H1 (cell line): ENCODE measurements at regions of chr16 and their contacts with region 1.

Region 1: DNA sequence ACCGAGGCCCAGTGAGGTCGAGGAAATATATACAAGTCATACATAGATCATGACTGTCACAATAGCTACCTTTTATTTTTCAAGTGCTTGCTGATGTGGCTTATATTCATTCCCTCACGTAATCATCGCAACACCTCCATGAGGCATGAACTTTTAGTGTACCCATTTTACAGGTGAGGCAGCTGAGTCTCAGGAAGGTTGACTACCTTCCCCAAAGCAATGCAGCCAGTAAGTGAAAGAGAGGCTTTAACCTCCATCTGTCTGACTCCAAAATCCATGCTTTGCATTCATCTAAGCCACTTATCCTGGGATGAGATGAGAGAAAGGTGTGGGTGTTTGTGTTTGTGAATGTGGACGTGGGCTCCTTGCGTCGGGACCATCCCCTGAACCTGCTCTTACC is 30.8 kb downstream of the CALB2 start:
- DNase-seq: no peak
- H3K4me3 ChIP-seq: no peak overlapping the region
- H3K27ac ChIP-seq: no peak overlapping the region
- H3K4me1 ChIP-seq: peaks cover 16 to 27% (median 22%) of the 10 kb centered on the region in 4 experiments; a peak in 6 of 7 replicates
- H3K27me3 ChIP-seq: 0 out of 7 replicates have a peak, but pooled peaks cover 0 to under 1% (median 0%) of the 10 kb centered on the region in 4 experiments
- CTCF ChIP-seq: no peak
- EP300 ChIP-seq: no peak
- POLR2A ChIP-seq: no peak
- RAD21 ChIP-seq: no peak

Region 2: GRCh38 chr16:71367241-71367976 is 21.9 kb before region 1 on chr16:
- CTCF ChIA-PET with region 1: interaction called, 11 read pairs
- POLR2A ChIA-PET with region 1: interaction called, 4 read pairs
- DNase-seq: peak; percentile 67 to 93
- H3K4me3 ChIP-seq: no peak overlapping the region
- H3K27ac ChIP-seq: no peak overlapping the region
- H3K4me1 ChIP-seq: no peaks in the 10 kb centered on the region
- H3K27me3 ChIP-seq: no peaks in the 10 kb centered on the region
- CTCF ChIP-seq: peak; percentile 79 to 96 (median 95)
- EP300 ChIP-seq: no peak
- POLR2A ChIP-seq: no peak
- RAD21 ChIP-seq: peak; percentile 76 to 81

Region 3: DNA sequence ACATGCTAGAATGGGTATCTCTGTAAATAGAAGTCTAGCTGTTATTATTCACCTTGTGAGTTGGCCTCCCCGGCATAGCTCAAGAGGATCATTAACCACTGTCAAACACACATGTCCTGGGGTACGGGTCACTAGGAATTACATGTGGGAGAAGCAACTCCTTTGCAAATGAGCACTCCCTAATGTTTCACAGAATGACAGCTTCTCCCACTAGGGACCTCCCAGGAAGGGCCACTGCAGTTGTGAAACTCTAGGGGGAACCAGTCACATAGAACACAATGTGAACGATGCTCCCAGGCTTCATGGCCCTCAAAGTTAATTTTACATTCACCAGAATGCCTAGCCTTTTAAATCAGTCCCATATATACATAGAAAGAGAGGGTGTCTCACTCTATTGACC is 112.2 kb after region 1 on chr16:
- CTCF ChIA-PET with region 1: no interaction called
- POLR2A ChIA-PET with region 1: no interaction called
- DNase-seq: no peak
- H3K4me3 ChIP-seq: no peak overlapping the region
- H3K27ac ChIP-seq: no peak overlapping the region
- H3K4me1 ChIP-seq: no peaks in the 10 kb centered on the region
- H3K27me3 ChIP-seq: no peaks in the 10 kb centered on the region; a peak in 1 of 7 replicates
- CTCF ChIP-seq: peak in 2 of 3 experiments; percentile 10 to 18; a peak in 2 of 4 replicates
- EP300 ChIP-seq: no peak
- POLR2A ChIP-seq: no peak
- RAD21 ChIP-seq: peak in 1 of 2 experiments; percentile 28; a peak in 1 of 4 replicates